ENCODE measurements at regions of chr13 and their contacts with region 1.

Region 1: GRCh38 chr13:45047394-45048310 is 58.3 kb downstream of the GPALPP1 start:
- DNase-seq: peak; percentile 33 to 57
- ATAC-seq: peak; percentile 92 to 94
- H3K4me3 ChIP-seq: peak overlapping the region; percentile 46 to 55 (median 54)
- H3K27ac ChIP-seq: peak overlapping the region; percentile 2 to 37 (median 26)
- H3K4me1 ChIP-seq: peaks cover 0 to 9% of the 10 kb centered on the region in 2 donors
- H3K27me3 ChIP-seq: no peaks in the 10 kb centered on the region
- CTCF ChIP-seq: peak; percentile 82 to 99 (median 87)
- POLR2A ChIP-seq: no peak

Region 2: GRCh38 chr13:45063261-45063860 is 15.7 kb after region 1 on chr13:
- in situ Hi-C with region 1: no loop called
- intact Hi-C with region 1: no loop called
- DNase-seq: no peak
- ATAC-seq: no peak
- H3K4me3 ChIP-seq: no peak overlapping the region
- H3K27ac ChIP-seq: no peak overlapping the region
- H3K4me1 ChIP-seq: no peaks in the 10 kb centered on the region
- H3K27me3 ChIP-seq: no peaks in the 10 kb centered on the region
- CTCF ChIP-seq: no peak
- POLR2A ChIP-seq: no peak

Region 3: GRCh38 chr13:45119991-45120864 is 72.6 kb after region 1 on chr13 and contains the start of gene GTF2F2:
- in situ Hi-C with region 1: no loop called
- intact Hi-C with region 1: loop called (anchors 5 kb)
- DNase-seq: peak; percentile 73 to 84
- ATAC-seq: peak; percentile 93 to 95
- H3K4me3 ChIP-seq: peak within 1 kb of the TSS; percentile 58 to 87 (median 82)
- H3K27ac ChIP-seq: peak within 1 kb of the TSS; percentile 84 to 92 (median 86)
- H3K4me1 ChIP-seq: peaks cover 18 to 19% of the 10 kb centered on the region in 2 donors
- H3K27me3 ChIP-seq: no peaks in the 10 kb centered on the region
- CTCF ChIP-seq: peak in 1 of 5 experiments; percentile 21
- POLR2A ChIP-seq: peak; percentile 39 to 41
- total RNA-seq, gene GTF2F2: 11.5 to 16.9 (median 13.3) TPM

Region 4: GRCh38 chr13:45280751-45281634 is 233.3 kb after region 1 on chr13:
- in situ Hi-C with region 1: loop called in 1 of 4 experiments (anchors 10 kb)
- intact Hi-C with region 1: loop called (anchors 1 kb)
- DNase-seq: peak; percentile 55 to 77
- ATAC-seq: peak; percentile 93 to 99
- H3K4me3 ChIP-seq: no peak overlapping the region
- H3K27ac ChIP-seq: peak overlapping the region in 3 of 4 donors; percentile 3 to 41 (median 6)
- H3K4me1 ChIP-seq: peaks cover 0 to 12% of the 10 kb centered on the region in 2 donors
- H3K27me3 ChIP-seq: no peaks in the 10 kb centered on the region
- CTCF ChIP-seq: peak; percentile 57 to 77 (median 73)
- POLR2A ChIP-seq: no peak

Region 5: GRCh38 chr13:45301243-45301642 is 253.6 kb after region 1 on chr13:
- in situ Hi-C with region 1: loop called in 3 of 4 experiments (anchors 5 to 10 kb)
- intact Hi-C with region 1: no loop called
- DNase-seq: no peak
- ATAC-seq: no peak
- H3K4me3 ChIP-seq: no peak overlapping the region
- H3K27ac ChIP-seq: no peak overlapping the region
- H3K4me1 ChIP-seq: peaks cover 13 to 23% of the 10 kb centered on the region in 2 donors
- H3K27me3 ChIP-seq: peaks cover 0 to 12% (median 0%) of the 10 kb centered on the region in 3 donors
- CTCF ChIP-seq: no peak
- POLR2A ChIP-seq: no peak

Region 6: DNA sequence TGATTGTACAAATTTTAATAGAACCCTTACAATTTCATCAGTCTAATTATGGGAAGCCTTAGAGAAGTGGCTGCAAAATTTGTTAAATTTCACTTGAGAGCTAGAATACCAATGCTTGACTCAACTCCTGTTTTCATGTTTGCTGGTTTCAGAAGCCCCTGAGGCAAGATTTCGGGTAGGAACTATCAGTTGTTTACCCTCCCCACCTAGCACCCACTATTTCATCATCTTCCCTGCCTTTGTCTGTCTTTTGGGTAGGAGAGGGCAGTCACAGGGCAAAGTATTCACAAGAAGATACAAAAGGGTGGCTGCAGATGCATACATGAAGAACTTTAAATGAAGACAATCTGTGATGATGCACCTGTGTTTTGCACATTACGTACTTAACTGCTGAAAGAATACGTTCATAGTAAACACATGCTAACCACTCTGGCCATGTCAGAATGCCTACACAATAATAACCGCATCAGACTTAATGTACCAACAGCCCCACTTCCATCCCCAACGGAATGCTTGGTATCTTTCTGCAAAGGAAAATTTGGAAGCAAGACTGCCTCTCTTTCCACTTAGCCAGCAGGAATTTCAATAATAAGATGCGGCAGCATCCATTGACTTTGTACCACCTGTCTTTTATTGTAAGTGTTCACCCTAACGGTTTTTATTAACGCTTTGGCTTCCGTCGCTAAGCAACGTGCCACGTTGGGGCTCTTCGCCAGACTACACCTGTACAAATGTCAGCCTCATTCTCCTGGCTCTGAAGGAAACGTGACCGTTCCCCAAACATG is 262.9 kb after region 1 on chr13:
- in situ Hi-C with region 1: loop called in 3 of 4 experiments (anchors 5 to 10 kb)
- intact Hi-C with region 1: loop called (anchors 1 kb)
- DNase-seq: no peak
- ATAC-seq: no peak
- H3K4me3 ChIP-seq: peak overlapping the region; percentile 39 to 56 (median 44)
- H3K27ac ChIP-seq: no peak overlapping the region
- H3K4me1 ChIP-seq: peaks cover 4 to 10% of the 10 kb centered on the region in 2 donors
- H3K27me3 ChIP-seq: no peaks in the 10 kb centered on the region
- CTCF ChIP-seq: no peak
- POLR2A ChIP-seq: no peak

Region 7: DNA sequence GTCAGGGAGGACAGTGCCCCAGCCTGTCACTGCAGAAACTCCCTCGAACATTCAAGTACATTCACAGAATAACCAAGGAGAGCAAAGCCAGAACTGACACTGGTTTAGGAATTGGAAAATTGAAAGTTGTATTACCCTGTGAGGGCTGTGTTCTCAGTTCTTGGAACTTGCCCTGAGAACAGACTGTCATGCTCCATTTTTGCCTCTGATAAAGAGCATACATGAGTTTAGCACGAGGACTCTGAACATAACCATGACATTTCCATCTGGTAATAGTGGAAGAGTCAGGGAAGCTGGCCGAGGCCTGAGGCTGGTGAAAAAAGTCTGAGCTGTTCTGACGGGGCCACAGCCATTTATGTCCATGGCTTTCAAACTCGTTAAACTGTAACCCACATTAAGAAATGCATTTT is 385.7 kb after region 1 on chr13:
- in situ Hi-C with region 1: no loop called
- intact Hi-C with region 1: no loop called
- DNase-seq: no peak
- ATAC-seq: peak; percentile 86 to 97
- H3K4me3 ChIP-seq: no peak overlapping the region
- H3K27ac ChIP-seq: peak overlapping the region; percentile 75 to 87 (median 81)
- H3K4me1 ChIP-seq: peaks cover 4 to 9% of the 10 kb centered on the region in 2 donors
- H3K27me3 ChIP-seq: no peaks in the 10 kb centered on the region
- CTCF ChIP-seq: no peak
- POLR2A ChIP-seq: no peak

Region 8: DNA sequence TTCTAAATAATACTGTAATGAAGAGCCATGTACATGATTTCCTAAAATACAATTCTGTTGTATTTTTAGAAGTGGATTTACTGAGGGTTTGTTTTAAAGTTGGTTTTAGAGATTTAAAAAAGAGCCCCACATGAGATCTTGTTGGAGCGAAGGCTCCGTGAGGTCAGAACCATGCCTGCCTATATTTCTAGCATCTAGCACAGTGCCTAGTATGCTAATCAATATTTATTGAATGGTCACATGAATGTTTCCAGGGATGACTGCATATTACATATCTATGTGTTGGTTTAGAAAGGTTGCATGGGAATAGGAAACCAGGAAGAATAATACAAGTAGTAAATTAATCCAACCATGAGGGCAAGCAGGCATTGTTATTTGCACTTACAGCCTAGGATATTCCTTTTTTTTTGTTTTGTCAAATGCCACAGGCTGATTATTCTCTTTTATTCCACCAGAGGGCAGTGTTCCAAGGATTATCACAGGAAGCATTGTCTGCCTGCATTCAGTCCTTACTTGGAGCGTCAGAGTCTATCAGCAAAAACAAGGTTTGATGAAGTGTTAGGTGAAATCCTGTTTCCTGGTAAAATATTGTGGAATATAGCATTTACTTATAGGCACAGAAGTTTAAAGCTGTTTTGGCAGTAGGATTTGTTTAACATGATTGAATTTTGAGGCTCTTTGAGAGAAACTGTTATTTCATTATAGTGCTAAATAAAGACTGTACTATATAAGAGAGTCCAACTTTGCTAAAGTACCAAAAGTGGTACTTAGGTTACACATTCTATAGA is 463.9 kb after region 1 on chr13:
- in situ Hi-C with region 1: loop called in 1 of 4 experiments (anchors 25 kb)
- intact Hi-C with region 1: no loop called
- DNase-seq: no peak
- ATAC-seq: peak; percentile 70 to 76
- H3K4me3 ChIP-seq: no peak overlapping the region
- H3K27ac ChIP-seq: no peak overlapping the region
- H3K4me1 ChIP-seq: no peaks in the 10 kb centered on the region
- H3K27me3 ChIP-seq: no peaks in the 10 kb centered on the region
- CTCF ChIP-seq: peak; percentile 67 to 85 (median 78)
- POLR2A ChIP-seq: no peak